Heart left ventricle (tissue), 16 donors: ENCODE measurements at regions of chr15 and their contacts with region 1.

Region 1: GRCh38 chr15:70679919-70680231 is 83.5 kb downstream of the UACA start:
- DNase-seq: no peak
- ATAC-seq: no peak
- H3K4me3 ChIP-seq: no peak overlapping the region
- H3K27ac ChIP-seq: peak overlapping the region in 2 of 12 donors; percentile 4 to 7
- H3K4me1 ChIP-seq: peaks cover 0 to 28% (median 4%) of the 10 kb centered on the region in 12 donors
- H3K27me3 ChIP-seq: no peaks in the 10 kb centered on the region
- CTCF ChIP-seq: no peak
- POLR2A ChIP-seq: no peak

Region 2: DNA sequence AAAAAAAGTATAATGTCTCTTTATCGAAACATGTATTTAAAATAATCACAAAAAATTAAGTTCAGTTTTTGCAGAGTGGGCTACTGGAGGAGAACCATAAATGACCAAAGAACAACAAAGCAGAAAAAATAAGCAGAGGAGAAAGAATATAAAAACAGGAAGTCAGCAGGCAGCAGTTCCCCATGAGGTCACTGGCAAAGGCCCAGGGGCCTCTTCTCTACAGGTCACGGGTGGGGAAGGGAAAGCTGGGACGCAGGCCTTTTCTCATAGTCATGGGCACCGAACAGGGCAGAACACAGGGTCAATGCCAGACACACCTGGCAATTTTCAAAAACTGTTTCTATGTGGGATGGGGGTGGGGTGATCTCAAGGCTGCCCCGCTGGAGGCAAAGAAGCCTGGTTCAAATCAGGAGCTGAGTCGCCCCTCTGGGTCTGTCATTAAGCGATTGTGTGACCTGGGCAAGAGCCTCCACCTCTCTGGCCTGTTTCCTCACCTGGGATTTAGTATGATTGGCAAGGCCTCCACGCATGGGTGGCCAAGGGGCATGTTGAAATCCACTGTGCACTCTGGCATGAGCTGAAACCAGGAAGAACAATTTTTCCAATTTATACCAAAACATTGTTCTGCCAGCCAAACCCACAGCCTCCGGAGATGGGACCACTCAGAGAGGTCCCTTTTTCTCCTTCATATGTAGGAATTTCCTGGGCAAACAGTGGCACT is 127.3 kb after region 1 on chr15:
- intact Hi-C with region 1: loop called (anchors 1 to 5 kb)
- DNase-seq: peak; percentile 58 to 80 (median 67)
- ATAC-seq: peak; percentile 7 to 73 (median 46)
- H3K4me3 ChIP-seq: no peak overlapping the region
- H3K27ac ChIP-seq: peak overlapping the region in 8 of 12 donors; percentile 7 to 72 (median 48)
- H3K4me1 ChIP-seq: peaks cover 0 to 45% (median 10%) of the 10 kb centered on the region in 12 donors
- H3K27me3 ChIP-seq: no peaks in the 10 kb centered on the region
- CTCF ChIP-seq: no peak
- POLR2A ChIP-seq: no peak

Region 3: GRCh38 chr15:70815644-70816043 is 135.8 kb after region 1 on chr15:
- intact Hi-C with region 1: loop called (anchors 1 to 5 kb)
- DNase-seq: no peak
- ATAC-seq: no peak
- H3K4me3 ChIP-seq: no peak overlapping the region
- H3K27ac ChIP-seq: no peak overlapping the region
- H3K4me1 ChIP-seq: peaks cover 0 to 17% (median 3%) of the 10 kb centered on the region in 12 donors
- H3K27me3 ChIP-seq: no peaks in the 10 kb centered on the region
- CTCF ChIP-seq: no peak
- POLR2A ChIP-seq: no peak

Region 4: GRCh38 chr15:70870051-70870450 is 190.2 kb after region 1 on chr15:
- intact Hi-C with region 1: loop called in 9 of 10 experiments (anchors 5 to 10 kb)
- DNase-seq: no peak
- ATAC-seq: peak in 2 of 4 donors; percentile 42 to 45
- H3K4me3 ChIP-seq: no peak overlapping the region
- H3K27ac ChIP-seq: peak overlapping the region in 4 of 12 donors; percentile 7 to 37 (median 14)
- H3K4me1 ChIP-seq: peaks cover 0 to 39% (median 24%) of the 10 kb centered on the region in 12 donors
- H3K27me3 ChIP-seq: no peaks in the 10 kb centered on the region
- CTCF ChIP-seq: no peak
- POLR2A ChIP-seq: no peak

Region 5: GRCh38 chr15:70875001-70875782 is 195.3 kb after region 1 on chr15:
- intact Hi-C with region 1: loop called in 9 of 10 experiments (anchors 5 to 10 kb)
- DNase-seq: no peak
- ATAC-seq: peak; percentile 11 to 67 (median 59)
- H3K4me3 ChIP-seq: no peak overlapping the region
- H3K27ac ChIP-seq: no peak overlapping the region
- H3K4me1 ChIP-seq: peaks cover 0 to 6% (median 3%) of the 10 kb centered on the region in 12 donors
- H3K27me3 ChIP-seq: no peaks in the 10 kb centered on the region
- CTCF ChIP-seq: peak; percentile 31 to 74 (median 62)
- POLR2A ChIP-seq: no peak